ENCODE measurements at regions of chr6 and their contacts with region 1.

Region 1: GRCh38 chr6:30013291-30013922 is 47.7 kb upstream of the POLR1H start:
- DNase-seq: no peak
- H3K4me3 ChIP-seq: no peak overlapping the region
- H3K27ac ChIP-seq: no peak overlapping the region
- H3K4me1 ChIP-seq: no peaks in the 10 kb centered on the region
- H3K27me3 ChIP-seq: no peaks in the 10 kb centered on the region
- CTCF ChIP-seq: peak; percentile 88

Region 2: GRCh38 chr6:29705389-29706231 is 307.8 kb before region 1 on chr6:
- CTCF ChIA-PET with region 1: no interaction called
- POLR2A ChIA-PET with region 1: no interaction called
- intact Hi-C with region 1: loop called (anchors 1 kb)
- DNase-seq: peak in 1 of 2 experiments; percentile 47
- H3K4me3 ChIP-seq: no peak overlapping the region
- H3K27ac ChIP-seq: no peak overlapping the region
- H3K4me1 ChIP-seq: no peaks in the 10 kb centered on the region
- H3K27me3 ChIP-seq: peaks cover 11% of the 10 kb centered on the region; the same call in 1 of the 2 replicates
- CTCF ChIP-seq: peak; percentile 74

Region 3: DNA sequence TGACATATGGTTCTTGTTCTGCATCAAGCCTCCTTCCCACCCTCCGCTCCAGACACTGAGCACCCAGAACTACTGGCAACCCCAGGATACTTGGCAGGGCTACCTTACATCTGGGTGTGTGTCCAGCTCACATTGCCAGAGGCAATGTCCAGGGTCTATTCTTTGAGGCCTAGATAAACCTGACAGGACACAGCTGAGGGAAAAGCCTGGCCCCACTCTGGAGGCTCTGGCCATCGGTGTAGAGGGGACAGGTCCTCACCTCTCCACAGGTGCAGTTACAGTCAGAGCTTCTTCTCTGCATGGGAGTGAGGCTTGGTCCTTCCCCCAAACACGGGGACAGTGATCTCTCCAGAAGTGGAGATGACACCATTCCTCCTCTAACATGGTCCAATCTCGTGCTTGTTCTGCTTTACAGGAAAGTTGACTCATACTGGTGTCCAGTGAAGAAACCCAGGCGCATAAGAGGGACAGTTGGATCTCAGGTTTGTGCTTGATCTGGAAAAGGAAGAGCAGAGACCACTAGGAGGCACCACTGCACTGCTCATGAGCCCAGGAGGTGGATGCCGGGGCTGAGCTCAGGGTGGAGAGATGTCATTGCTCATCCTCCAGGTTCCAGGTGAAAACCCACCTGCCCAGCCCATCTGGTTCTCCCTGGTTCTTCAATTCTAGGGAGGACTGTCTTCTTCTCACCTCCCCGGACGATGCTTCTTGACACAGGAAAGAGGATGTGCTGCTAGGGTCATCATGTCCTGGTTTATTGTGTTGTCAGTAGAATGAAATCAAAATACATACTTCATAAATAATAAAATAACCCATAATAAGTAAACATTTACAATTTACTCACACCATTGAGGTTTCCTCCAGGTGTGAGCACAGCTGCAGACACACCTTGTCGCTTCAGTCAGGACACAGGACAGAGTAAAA is 275.4 kb before region 1 on chr6:
- CTCF ChIA-PET with region 1: no interaction called
- POLR2A ChIA-PET with region 1: no interaction called
- intact Hi-C with region 1: loop called (anchors 2 kb)
- DNase-seq: peak; percentile 61 to 66
- H3K4me3 ChIP-seq: no peak overlapping the region
- H3K27ac ChIP-seq: no peak overlapping the region
- H3K4me1 ChIP-seq: no peaks in the 10 kb centered on the region
- H3K27me3 ChIP-seq: no peaks in the 10 kb centered on the region
- CTCF ChIP-seq: peak; percentile 90

Region 4: GRCh38 chr6:29827579-29828470 is 185.6 kb before region 1 on chr6 and contains the start of gene HLA-G:
- CTCF ChIA-PET with region 1: no interaction called
- POLR2A ChIA-PET with region 1: no interaction called
- intact Hi-C with region 1: no loop called
- DNase-seq: no peak
- H3K4me3 ChIP-seq: no peak within 1 kb of the TSS
- H3K27ac ChIP-seq: no peak within 1 kb of the TSS
- H3K4me1 ChIP-seq: no peaks in the 10 kb centered on the region
- H3K27me3 ChIP-seq: no peaks in the 10 kb centered on the region
- CTCF ChIP-seq: no peak
- total RNA-seq, gene HLA-G: 0.38 and 0.50 TPM in 2 replicates

Region 5: DNA sequence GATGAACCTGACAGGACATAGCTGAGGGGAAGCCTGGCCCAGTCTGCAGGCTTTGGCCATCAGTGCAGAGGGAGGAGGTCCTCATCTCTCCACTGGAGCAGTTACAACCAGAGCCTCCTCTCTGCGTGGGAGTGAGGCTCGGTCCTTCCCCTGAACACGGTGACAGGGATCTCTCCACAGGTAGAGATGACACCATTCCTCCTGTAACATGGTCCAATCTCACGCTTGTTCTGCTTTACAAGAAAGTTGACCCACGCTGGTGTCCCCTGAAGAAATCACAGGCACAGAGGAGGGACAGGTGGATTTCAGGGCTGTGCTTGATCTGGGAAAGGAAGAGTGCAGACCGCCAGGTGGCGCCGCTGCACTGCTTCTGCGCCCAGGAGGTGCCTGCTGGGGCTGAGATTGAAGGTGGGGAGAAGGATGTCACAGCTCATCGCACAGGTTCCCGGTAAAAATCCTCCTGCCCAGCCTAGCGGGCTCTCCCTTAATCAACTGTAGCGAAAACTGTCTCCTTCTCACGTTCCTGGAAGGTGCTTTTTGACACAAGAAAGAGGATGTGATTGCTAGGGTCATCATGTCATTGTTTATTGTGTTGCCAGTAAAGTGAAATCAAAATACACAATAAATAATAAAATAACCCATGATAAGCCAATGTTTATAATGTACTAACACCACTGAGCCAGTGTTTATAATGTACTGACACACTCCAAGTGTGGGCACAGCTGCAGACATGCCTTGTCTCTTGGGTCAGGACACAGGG is 165.4 kb before region 1 on chr6:
- CTCF ChIA-PET with region 1: interaction called, 6 read pairs
- POLR2A ChIA-PET with region 1: interaction called, 4 read pairs
- intact Hi-C with region 1: loop called (anchors 1 kb)
- DNase-seq: peak; percentile 43 to 79
- H3K4me3 ChIP-seq: no peak overlapping the region
- H3K27ac ChIP-seq: no peak overlapping the region
- H3K4me1 ChIP-seq: no peaks in the 10 kb centered on the region
- H3K27me3 ChIP-seq: no peaks in the 10 kb centered on the region
- CTCF ChIP-seq: peak; percentile 95

Region 6: DNA sequence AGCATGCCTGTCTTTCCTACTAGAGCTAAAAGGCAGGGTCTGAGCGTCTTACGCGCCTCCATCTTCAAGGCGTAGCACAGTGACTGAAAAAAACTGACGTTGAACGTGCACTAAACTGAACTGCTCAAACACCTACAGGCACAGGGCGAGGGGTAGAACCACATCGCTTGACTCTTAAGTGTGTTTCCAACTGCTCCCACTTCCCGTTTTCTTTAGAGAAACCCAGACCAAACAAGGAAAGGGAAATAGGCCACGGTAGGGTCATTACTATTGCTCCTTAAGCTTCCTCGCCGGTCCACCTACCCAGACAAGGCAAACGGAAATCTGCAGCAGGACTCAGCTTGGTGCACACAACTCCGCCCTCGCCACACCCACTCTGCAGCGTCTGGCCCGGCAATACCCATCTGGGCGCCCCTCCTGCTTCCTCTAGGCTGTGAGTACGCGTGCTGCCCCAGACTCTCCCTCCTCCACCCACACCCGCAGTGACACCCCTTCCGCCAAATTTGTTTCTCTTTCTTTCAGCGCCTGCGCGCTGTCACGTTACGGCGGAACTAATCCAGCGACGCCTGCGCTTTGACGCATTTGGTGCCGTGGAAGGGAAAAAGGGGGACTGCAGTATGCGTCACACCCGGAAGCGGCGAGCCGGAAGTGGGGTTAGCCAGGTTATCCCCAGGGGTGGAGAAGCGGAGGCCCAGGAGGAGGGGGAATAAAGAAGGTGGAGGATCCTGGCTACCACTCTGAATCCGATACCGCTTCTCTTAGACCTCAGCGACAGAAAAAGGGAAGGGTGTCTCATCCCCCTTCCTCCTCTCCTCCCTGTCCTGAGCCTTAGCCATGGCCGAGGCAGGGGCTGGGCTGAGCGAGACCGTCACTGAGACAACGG is 53.4 kb after region 1 on chr6 and contains the start of gene PPP1R11:
- CTCF ChIA-PET with region 1: no interaction called
- POLR2A ChIA-PET with region 1: no interaction called
- intact Hi-C with region 1: no loop called
- DNase-seq: peak; percentile 96 to 99
- H3K4me3 ChIP-seq: peak within 1 kb of the TSS; percentile 81
- H3K27ac ChIP-seq: peak within 1 kb of the TSS; percentile 40
- H3K4me1 ChIP-seq: peaks cover 24% of the 10 kb centered on the region
- H3K27me3 ChIP-seq: no peaks in the 10 kb centered on the region
- CTCF ChIP-seq: no peak
- total RNA-seq, gene PPP1R11: 48.3 and 49.3 TPM in 2 replicates

Region 7: DNA sequence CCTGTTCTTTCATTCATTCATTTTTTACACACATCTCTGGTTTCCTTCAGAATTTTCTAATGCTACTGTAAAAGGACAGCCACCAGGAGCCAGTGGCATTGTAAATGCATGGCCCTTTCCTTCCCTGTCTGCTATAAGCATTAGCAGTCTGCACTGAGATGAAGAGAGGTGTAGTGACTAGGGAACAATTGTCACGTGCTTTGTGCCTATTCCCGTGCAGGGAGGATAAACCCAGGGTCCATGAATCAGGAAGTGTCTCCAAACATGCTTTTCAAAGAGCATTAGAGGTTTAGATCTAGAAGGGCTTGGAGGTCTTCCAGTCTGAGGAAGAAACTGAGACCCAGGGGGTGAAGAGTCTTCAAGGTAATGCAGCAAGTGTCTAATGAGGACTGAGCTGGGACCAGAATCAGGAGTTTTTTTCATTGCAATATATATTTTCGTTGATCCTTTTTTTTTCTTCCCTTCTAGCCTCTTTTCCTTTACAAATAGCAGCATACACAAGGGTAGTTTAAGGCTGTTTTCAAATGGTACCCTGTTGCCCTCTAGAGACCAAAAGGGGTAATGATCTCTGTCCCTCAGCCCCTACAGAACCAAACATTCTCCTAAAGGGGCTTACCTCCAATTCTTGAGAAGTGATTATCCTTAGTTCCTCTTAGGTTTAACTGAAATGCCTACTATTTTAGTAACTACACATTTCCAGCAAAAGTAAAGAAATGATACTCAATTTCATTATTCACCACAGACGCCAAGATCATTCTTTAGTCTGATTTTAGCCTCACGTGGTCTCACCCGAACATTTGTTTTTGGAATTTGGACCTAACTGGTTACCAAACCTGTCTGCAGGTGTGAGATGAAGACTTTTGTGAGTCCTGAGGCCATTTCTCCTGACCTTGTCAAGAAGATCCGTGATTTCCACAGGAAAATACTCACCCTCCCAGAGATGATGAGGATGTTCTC is 156.5 kb after region 1 on chr6:
- CTCF ChIA-PET with region 1: interaction called, 8 read pairs
- POLR2A ChIA-PET with region 1: no interaction called
- intact Hi-C with region 1: loop called (anchors 10 kb)
- DNase-seq: peak; percentile 11 to 51
- H3K4me3 ChIP-seq: no peak overlapping the region
- H3K27ac ChIP-seq: no peak overlapping the region
- H3K4me1 ChIP-seq: no peaks in the 10 kb centered on the region
- H3K27me3 ChIP-seq: peaks cover 28% of the 10 kb centered on the region
- CTCF ChIP-seq: peak; percentile 87

Region 8: GRCh38 chr6:30219244-30219643 is 205.8 kb after region 1 on chr6:
- CTCF ChIA-PET with region 1: no interaction called
- POLR2A ChIA-PET with region 1: no interaction called
- intact Hi-C with region 1: no loop called
- DNase-seq: peak; percentile 59 to 63
- H3K4me3 ChIP-seq: no peak overlapping the region
- H3K27ac ChIP-seq: no peak overlapping the region
- H3K4me1 ChIP-seq: no peaks in the 10 kb centered on the region
- H3K27me3 ChIP-seq: no peaks in the 10 kb centered on the region
- CTCF ChIP-seq: peak; percentile 76

Region 9: GRCh38 chr6:30295837-30296236 is 282.4 kb after region 1 on chr6:
- CTCF ChIA-PET with region 1: no interaction called
- POLR2A ChIA-PET with region 1: no interaction called
- intact Hi-C with region 1: no loop called
- DNase-seq: no peak
- H3K4me3 ChIP-seq: no peak overlapping the region
- H3K27ac ChIP-seq: no peak overlapping the region
- H3K4me1 ChIP-seq: no peaks in the 10 kb centered on the region
- H3K27me3 ChIP-seq: no peaks in the 10 kb centered on the region
- CTCF ChIP-seq: no peak

Measured in PC-9 (cell line).